CD8-positive, alpha-beta T cell (primary cell): ENCODE measurements at regions of chr2 and their contacts with region 1.

Region 1: DNA sequence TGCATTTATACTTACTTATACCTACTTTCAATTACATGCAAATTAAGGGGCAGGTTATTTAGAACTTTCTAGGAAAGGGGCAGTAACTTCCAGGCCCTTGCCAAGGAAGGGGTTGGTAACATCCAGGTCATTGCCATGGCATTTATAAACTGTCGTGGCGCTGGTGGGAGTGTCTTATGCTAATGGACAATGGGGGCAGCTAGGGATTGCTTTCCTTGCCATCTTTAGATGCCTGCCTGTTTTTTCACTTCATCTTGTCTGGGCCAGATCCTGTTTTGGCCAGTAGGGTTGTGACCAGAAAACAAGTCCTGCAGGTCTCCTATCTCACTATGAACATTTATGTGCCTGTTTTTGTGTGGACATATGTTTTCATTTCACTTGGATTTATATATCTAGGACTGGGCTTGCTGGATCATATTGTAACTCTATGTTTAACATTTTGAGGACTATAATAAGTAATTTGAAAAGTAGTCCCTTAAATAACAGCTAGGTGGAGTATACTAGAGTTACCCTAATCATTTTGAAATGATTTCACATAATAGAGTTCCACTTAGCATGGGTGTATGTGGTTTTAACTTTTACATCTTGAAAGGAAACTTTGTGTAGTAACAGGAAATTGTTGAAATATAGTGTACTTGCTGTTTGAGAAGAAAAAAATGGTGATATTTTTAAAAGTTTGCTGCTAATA is 56.1 kb downstream of the LCLAT1 start:
- DNase-seq: peak in 2 of 9 experiments; percentile 10 to 48
- ATAC-seq: peak; percentile 88
- H3K4me3 ChIP-seq: no peak overlapping the region
- H3K4me3 Mint-ChIP-seq: peak overlapping the region; percentile 40
- H3K27ac ChIP-seq: peak overlapping the region in 1 of 2 experiments; percentile 63
- H3K27ac Mint-ChIP-seq: peak overlapping the region; percentile 81
- H3K4me1 ChIP-seq: peaks cover 38% of the 10 kb centered on the region
- H3K4me1 Mint-ChIP-seq: peaks cover 41% of the 10 kb centered on the region
- H3K27me3 ChIP-seq: no peaks in the 10 kb centered on the region
- H3K27me3 Mint-ChIP-seq: no peaks in the 10 kb centered on the region
- CTCF ChIP-seq: no peak

Region 2: DNA sequence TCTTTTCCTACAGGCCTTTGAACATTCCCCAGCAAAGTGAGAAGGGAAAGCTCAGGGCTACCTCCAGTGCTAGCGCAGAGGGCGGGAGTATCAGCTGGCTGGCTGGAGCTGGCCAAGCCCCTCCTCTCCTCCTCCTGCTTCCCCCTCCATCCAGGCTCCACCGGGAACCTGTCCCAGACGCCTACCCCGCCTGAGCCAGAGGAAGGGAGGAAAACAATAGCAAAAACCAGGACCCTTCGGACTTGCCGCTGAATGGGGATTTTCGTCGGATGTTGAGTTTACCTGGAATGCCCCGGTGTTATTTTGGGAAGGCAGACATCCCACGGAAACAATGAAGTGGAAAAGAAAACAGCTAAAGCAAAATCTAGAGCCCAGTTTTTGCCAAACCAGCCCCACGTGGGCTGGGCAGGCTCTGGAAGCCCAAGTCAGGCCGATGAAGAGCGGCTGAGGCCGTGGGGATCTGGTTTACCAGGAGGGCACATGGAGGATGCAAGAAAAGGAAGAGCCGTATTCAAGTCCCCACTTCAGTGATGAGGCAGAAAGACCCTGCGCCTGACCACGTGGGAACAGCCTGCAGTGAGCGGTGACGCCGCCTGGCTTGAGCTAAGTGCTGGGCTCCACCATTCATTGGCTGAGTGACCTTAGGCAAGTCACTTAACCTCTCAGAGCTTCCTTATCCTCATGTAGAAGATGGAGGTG is 156.5 kb before region 1 on chr2:
- CTCF ChIA-PET with region 1: no interaction called
- POLR2A ChIA-PET with region 1: no interaction called
- intact Hi-C with region 1: no loop called
- DNase-seq: no peak
- ATAC-seq: no peak
- H3K4me3 ChIP-seq: no peak overlapping the region
- H3K4me3 Mint-ChIP-seq: no peak overlapping the region
- H3K27ac ChIP-seq: no peak overlapping the region
- H3K27ac Mint-ChIP-seq: no peak overlapping the region
- H3K4me1 ChIP-seq: no peaks in the 10 kb centered on the region
- H3K4me1 Mint-ChIP-seq: peaks cover 3% of the 10 kb centered on the region
- H3K27me3 ChIP-seq: no peaks in the 10 kb centered on the region
- H3K27me3 Mint-ChIP-seq: no peaks in the 10 kb centered on the region
- CTCF ChIP-seq: no peak

Region 3: GRCh38 chr2:30527859-30528258 is 24.7 kb after region 1 on chr2:
- CTCF ChIA-PET with region 1: interaction called, 3 read pairs
- POLR2A ChIA-PET with region 1: no interaction called
- intact Hi-C with region 1: loop called in 1 of 2 experiments (anchors 2 kb)
- DNase-seq: no peak
- ATAC-seq: no peak
- H3K4me3 ChIP-seq: no peak overlapping the region
- H3K4me3 Mint-ChIP-seq: no peak overlapping the region
- H3K27ac ChIP-seq: no peak overlapping the region
- H3K27ac Mint-ChIP-seq: no peak overlapping the region
- H3K4me1 ChIP-seq: no peaks in the 10 kb centered on the region
- H3K4me1 Mint-ChIP-seq: peaks cover 5% of the 10 kb centered on the region
- H3K27me3 ChIP-seq: no peaks in the 10 kb centered on the region
- H3K27me3 Mint-ChIP-seq: no peaks in the 10 kb centered on the region
- CTCF ChIP-seq: no peak

Region 4: GRCh38 chr2:30541680-30542079 is 38.5 kb after region 1 on chr2:
- CTCF ChIA-PET with region 1: no interaction called
- POLR2A ChIA-PET with region 1: no interaction called
- intact Hi-C with region 1: loop called in 1 of 2 experiments (anchors 5 kb)
- DNase-seq: no peak
- ATAC-seq: no peak
- H3K4me3 ChIP-seq: no peak overlapping the region
- H3K4me3 Mint-ChIP-seq: no peak overlapping the region
- H3K27ac ChIP-seq: no peak overlapping the region
- H3K27ac Mint-ChIP-seq: no peak overlapping the region
- H3K4me1 ChIP-seq: peaks cover 10% of the 10 kb centered on the region
- H3K4me1 Mint-ChIP-seq: peaks cover 21% of the 10 kb centered on the region
- H3K27me3 ChIP-seq: no peaks in the 10 kb centered on the region
- H3K27me3 Mint-ChIP-seq: no peaks in the 10 kb centered on the region
- CTCF ChIP-seq: no peak

Region 5: GRCh38 chr2:30691948-30692828 is 189.0 kb after region 1 on chr2:
- CTCF ChIA-PET with region 1: no interaction called
- POLR2A ChIA-PET with region 1: no interaction called
- intact Hi-C with region 1: loop called in 1 of 2 experiments (anchors 5 kb)
- DNase-seq: peak in 1 of 9 experiments; percentile 42
- ATAC-seq: no peak
- H3K4me3 ChIP-seq: no peak overlapping the region
- H3K4me3 Mint-ChIP-seq: no peak overlapping the region
- H3K27ac ChIP-seq: no peak overlapping the region
- H3K27ac Mint-ChIP-seq: no peak overlapping the region
- H3K4me1 ChIP-seq: no peaks in the 10 kb centered on the region
- H3K4me1 Mint-ChIP-seq: no peaks in the 10 kb centered on the region
- H3K27me3 ChIP-seq: peaks cover 0 to 4% of the 10 kb centered on the region in 2 experiments
- H3K27me3 Mint-ChIP-seq: peaks cover 2% of the 10 kb centered on the region
- CTCF ChIP-seq: no peak